Left colon (tissue), 2 donors: ENCODE measurements at regions of chr19 and their contacts with region 1.

Region 1: GRCh38 chr19:7197760-7198696 is 96.2 kb downstream of the INSR start:
- DNase-seq: peak; percentile 92 to 93
- ATAC-seq: peak; percentile 78

Region 2: GRCh38 chr19:7004313-7004931 is 193.6 kb before region 1 on chr19:
- intact Hi-C with region 1: no loop called
- DNase-seq: no peak
- ATAC-seq: no peak

Region 3: GRCh38 chr19:7293795-7294570 is 96.0 kb after region 1 on chr19 and contains the start of gene INSR:
- intact Hi-C with region 1: loop called in 1 of 2 experiments (anchors 10 kb)
- DNase-seq: peak; percentile 88 to 89
- ATAC-seq: peak; percentile 89
- total RNA-seq, gene INSR: 81.9 to 84.9 TPM